ENCODE measurements at regions of chr19 and their contacts with region 1.

Region 1: DNA sequence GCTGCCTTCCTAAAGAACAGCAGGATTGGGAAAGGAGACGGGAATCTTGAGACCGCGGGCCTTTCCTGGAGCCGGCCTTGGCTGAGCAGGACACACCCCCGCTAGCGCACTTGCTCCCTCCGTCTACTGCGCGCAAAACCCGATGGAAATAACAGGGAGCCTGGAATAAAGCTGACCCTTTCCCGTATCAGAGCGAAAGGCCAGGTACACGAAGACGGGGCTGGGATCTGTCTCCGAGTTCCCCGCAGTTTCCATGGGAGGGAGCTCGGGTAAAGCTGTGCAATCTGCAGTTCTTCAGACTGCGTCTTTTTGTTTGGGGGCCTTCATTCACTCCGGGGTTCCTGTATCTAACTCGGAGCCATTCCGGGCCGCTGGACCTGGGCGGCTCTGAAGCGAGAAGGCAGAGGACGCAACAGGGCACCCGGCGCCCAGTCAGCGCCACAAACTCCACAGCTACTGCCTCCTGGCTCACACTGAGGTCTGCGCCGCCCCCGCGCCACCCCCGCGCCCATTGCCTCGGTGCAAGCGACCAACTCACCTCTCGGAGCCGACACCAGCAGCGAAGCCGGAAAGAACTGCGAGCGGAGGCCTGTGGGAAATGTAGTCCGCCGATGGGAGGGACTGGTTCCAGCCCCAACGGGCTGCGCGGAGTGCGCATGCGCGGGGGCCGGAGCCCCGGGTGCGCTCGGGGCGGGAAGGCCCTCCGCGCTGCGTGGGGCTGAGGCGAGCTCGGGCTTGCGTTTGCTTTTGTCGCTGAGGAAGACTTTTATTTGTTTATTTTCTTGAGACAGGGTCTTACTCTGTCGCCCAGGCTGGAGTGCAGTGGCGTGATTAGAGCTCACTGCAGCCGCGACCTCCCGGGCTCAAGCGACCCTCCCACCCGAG is at the start of gene ZFP14:
- DNase-seq: peak; percentile 97
- ATAC-seq: peak; percentile 99
- H3K4me3 Mint-ChIP-seq: peak within 1 kb of the TSS; percentile 93
- H3K27ac Mint-ChIP-seq: peak within 1 kb of the TSS; percentile 88
- H3K4me1 Mint-ChIP-seq: peaks cover 18% of the 10 kb centered on the region
- H3K27me3 Mint-ChIP-seq: no peaks in the 10 kb centered on the region
- total RNA-seq, gene ZFP14: 1.4 to 1.8 TPM

Region 2: DNA sequence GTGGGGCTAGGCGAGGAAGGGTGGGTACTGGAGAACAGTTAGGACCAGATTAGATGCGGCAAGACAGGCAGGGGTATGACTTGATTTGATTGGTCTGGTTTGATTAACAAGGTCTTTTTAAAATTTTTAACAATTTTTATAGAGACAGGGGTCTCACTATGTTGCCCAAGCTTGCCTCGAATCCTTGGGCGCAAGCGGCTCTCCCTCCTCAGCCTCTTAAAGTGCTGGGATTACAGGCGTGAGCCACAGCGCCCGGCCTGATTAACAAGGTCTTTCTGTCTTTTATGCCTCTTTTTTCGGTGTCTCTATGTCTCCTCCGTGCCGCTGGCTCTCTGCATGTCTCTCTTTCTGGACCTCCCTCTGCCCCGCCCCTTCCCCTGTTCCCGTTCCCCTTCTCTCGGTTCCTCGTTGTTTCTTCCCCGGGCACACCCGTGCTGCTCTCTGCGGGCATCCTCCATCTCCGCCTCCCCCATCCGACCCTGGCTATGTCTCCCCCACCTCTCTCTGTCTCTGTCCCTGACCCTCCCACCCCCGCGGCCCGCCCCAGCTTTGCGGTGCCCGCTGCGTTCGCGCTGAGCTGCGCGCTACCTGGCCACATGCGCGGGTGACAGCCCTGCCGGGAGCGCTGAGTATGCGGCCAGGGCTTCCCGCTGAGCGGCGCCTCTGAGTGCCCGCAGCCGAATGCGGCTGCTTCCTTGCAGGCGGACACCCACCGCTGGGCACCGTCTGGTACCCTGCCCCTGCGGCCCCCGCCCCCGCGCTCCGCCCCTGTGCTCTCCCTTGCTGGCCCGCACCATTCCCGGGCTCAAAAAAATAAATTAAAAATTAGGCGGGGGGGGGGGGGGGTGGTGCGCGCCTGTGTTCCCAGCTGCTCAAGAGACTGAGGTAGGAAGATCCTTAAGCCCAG is 391.9 kb before region 1 on chr19:
- CTCF ChIA-PET with region 1: no interaction called
- POLR2A ChIA-PET with region 1: no interaction called
- intact Hi-C with region 1: no loop called
- DNase-seq: peak; percentile 55
- ATAC-seq: peak; percentile 80
- H3K4me3 Mint-ChIP-seq: peak overlapping the region; percentile 62
- H3K27ac Mint-ChIP-seq: no peak overlapping the region
- H3K4me1 Mint-ChIP-seq: peaks cover 5% of the 10 kb centered on the region
- H3K27me3 Mint-ChIP-seq: peaks cover 35% of the 10 kb centered on the region

Region 3: GRCh38 chr19:36331353-36332228 is 47.3 kb before region 1 on chr19:
- CTCF ChIA-PET with region 1: no interaction called
- POLR2A ChIA-PET with region 1: no interaction called
- intact Hi-C with region 1: loop called in 1 of 2 experiments (anchors 1 kb)
- DNase-seq: peak; percentile 82
- ATAC-seq: peak; percentile 97
- H3K4me3 Mint-ChIP-seq: peak overlapping the region; percentile 67
- H3K27ac Mint-ChIP-seq: peak overlapping the region; percentile 47
- H3K4me1 Mint-ChIP-seq: peaks cover 13% of the 10 kb centered on the region
- H3K27me3 Mint-ChIP-seq: no peaks in the 10 kb centered on the region

Region 4: GRCh38 chr19:36528194-36528920 is 149.5 kb after region 1 on chr19 and contains the start of gene ZNF260:
- CTCF ChIA-PET with region 1: no interaction called
- POLR2A ChIA-PET with region 1: no interaction called
- intact Hi-C with region 1: loop called (anchors 1 to 2 kb)
- DNase-seq: peak; percentile 97
- ATAC-seq: peak; percentile 91
- H3K4me3 Mint-ChIP-seq: peak within 1 kb of the TSS; percentile 87
- H3K27ac Mint-ChIP-seq: peak within 1 kb of the TSS; percentile 96
- H3K4me1 Mint-ChIP-seq: peaks cover 14% of the 10 kb centered on the region
- H3K27me3 Mint-ChIP-seq: no peaks in the 10 kb centered on the region
- total RNA-seq, gene ZNF260: 5.7 to 8.2 TPM

Region 5: DNA sequence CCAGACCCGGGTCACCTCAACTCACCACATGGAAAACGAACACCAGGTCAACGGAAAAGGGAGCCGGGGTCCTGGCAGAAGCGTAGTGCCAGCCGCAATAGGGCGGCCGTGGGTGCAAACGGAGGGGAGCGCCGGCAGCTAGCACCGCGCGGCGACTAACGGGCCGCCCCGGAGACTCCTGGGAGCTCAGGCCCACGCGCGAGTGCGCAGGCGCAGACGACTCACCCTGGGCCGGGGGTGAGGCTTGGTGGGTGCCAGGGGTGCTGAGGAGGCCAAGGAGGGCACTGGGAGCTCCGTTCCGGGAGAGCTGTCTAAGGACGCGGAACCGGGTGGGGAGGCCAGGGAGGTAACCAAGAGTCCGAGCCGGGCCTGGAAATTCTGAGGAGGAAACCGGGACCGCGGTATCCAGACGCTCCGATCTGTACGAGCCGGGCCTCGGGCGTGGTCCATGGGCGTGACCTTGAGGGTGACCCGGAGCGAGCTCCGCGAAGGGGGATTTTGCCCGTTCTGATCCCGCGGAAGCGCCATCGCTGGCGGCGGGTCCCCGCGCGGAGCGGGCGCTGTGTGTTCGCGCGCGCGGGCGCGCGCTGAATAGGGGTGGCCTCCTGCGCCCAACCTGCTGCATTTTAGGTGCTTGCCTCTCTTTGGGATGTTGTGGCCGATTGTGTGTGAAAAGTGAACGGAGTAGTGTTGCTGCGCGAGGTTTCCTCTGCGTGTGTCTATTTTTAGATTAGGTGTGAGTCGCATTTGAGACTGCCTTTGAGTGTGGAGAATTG is 226.4 kb after region 1 on chr19 and contains the start of gene ZNF382:
- CTCF ChIA-PET with region 1: no interaction called
- POLR2A ChIA-PET with region 1: no interaction called
- intact Hi-C with region 1: loop called in 1 of 2 experiments (anchors 1 kb)
- DNase-seq: peak; percentile 94
- ATAC-seq: peak; percentile 86
- H3K4me3 Mint-ChIP-seq: peak within 1 kb of the TSS; percentile 81
- H3K27ac Mint-ChIP-seq: peak within 1 kb of the TSS; percentile 91
- H3K4me1 Mint-ChIP-seq: peaks cover 20% of the 10 kb centered on the region
- H3K27me3 Mint-ChIP-seq: no peaks in the 10 kb centered on the region
- total RNA-seq, gene ZNF382: 14.9 to 20.0 TPM

Region 6: DNA sequence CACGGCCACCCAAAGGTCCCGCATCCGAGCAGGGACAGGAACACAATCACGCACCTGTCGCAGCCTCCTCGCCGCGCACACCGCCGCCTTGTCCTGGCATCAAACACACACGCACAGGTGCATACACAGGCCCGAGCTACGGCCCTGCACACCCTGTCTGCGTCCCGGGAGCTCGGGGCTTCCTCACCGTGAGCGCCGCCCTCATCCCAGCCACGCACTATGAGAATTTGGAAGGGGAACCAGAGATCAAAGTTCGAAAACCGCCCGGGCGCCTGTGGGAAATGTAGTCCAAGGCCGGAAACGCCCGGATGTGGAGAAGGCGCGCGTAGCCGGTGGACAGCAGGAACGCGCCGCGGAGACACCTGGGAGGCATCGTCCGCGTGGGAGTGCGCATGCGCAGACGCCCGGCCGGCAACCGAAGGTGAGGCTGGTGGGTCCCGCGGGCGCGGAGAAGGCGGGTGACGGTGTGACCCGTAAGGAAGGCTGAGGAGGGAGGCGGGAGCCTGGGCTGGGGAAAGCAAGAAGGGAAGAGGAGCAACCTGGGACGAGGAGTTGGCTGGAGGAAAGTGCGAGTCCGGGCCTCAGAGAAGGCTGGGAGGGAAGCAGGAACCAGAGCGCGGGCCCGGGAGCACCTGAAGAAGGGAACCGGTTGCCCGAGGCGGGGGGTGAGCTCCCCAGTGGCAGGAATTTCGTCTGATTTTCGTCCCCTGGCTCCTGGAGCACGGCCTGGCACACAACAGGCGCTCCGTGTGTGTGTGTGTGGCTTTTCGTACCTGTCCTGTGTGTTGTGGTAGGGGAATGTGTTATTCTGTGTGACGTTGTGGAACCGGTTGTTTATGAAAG is 308.6 kb after region 1 on chr19 and contains the start of gene ZNF567:
- CTCF ChIA-PET with region 1: no interaction called
- POLR2A ChIA-PET with region 1: no interaction called
- intact Hi-C with region 1: loop called in 1 of 2 experiments (anchors 1 kb)
- DNase-seq: peak; percentile 99
- ATAC-seq: peak; percentile 93
- H3K4me3 Mint-ChIP-seq: peak within 1 kb of the TSS; percentile 99
- H3K27ac Mint-ChIP-seq: peak within 1 kb of the TSS; percentile 96
- H3K4me1 Mint-ChIP-seq: peaks cover 27% of the 10 kb centered on the region
- H3K27me3 Mint-ChIP-seq: no peaks in the 10 kb centered on the region
- total RNA-seq, gene ZNF567: 7.4 to 8.6 TPM

Region 7: DNA sequence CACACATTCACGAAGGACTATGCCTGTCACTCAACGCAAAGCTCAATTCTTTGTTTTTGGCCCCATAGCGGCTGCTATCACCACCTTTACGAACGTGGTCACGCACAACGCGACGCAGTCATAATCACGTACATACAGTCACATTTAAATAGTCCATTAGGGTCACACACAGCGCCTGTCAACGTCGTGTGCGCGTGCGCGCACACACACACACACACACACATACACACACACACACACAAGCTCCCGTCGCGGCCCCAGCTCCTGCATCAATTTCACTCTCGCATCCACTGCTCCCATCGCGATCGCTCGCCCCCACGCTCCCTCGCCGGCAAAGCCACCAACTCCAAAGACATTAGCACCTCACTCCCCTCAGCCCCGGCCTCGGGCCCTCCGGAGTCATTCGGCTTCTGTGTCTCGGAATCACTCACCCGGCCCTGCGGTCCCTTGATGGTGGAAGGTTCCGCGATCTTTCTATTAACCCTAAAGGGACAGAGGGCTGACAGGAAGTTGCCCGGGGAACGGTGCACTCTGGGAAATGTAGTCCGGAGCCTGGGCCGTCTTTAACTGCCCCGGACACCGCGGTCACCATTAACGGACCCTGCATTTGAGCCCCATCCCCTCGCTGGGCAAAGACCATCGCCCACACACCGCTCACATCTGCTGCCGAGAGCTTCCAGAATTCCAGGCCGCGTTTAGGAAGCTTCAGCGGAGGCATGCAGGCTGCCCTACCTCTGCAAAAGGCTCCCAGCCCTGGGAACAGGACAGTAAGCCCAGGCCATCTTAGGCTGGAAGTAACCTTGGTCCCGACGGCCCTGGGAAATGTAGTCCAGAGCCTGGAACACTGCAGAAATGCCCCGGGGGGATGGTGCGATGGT is 459.3 kb after region 1 on chr19 and contains the start of gene ZNF790:
- CTCF ChIA-PET with region 1: no interaction called
- POLR2A ChIA-PET with region 1: interaction called, 4 read pairs
- intact Hi-C with region 1: loop called in 1 of 2 experiments (anchors 1 kb)
- DNase-seq: peak; percentile 92
- ATAC-seq: peak; percentile 97
- H3K4me3 Mint-ChIP-seq: no peak within 1 kb of the TSS
- H3K27ac Mint-ChIP-seq: peak within 1 kb of the TSS; percentile 72
- H3K4me1 Mint-ChIP-seq: peaks cover 2% of the 10 kb centered on the region
- H3K27me3 Mint-ChIP-seq: no peaks in the 10 kb centered on the region
- total RNA-seq, gene ZNF790: 7.1 to 8.8 TPM

Region 8: GRCh38 chr19:37095859-37096258 is 717.0 kb after region 1 on chr19:
- CTCF ChIA-PET with region 1: no interaction called
- POLR2A ChIA-PET with region 1: no interaction called
- intact Hi-C with region 1: no loop called
- DNase-seq: no peak
- ATAC-seq: no peak
- H3K4me3 Mint-ChIP-seq: no peak overlapping the region
- H3K27ac Mint-ChIP-seq: no peak overlapping the region
- H3K4me1 Mint-ChIP-seq: no peaks in the 10 kb centered on the region
- H3K27me3 Mint-ChIP-seq: no peaks in the 10 kb centered on the region

Region 9: DNA sequence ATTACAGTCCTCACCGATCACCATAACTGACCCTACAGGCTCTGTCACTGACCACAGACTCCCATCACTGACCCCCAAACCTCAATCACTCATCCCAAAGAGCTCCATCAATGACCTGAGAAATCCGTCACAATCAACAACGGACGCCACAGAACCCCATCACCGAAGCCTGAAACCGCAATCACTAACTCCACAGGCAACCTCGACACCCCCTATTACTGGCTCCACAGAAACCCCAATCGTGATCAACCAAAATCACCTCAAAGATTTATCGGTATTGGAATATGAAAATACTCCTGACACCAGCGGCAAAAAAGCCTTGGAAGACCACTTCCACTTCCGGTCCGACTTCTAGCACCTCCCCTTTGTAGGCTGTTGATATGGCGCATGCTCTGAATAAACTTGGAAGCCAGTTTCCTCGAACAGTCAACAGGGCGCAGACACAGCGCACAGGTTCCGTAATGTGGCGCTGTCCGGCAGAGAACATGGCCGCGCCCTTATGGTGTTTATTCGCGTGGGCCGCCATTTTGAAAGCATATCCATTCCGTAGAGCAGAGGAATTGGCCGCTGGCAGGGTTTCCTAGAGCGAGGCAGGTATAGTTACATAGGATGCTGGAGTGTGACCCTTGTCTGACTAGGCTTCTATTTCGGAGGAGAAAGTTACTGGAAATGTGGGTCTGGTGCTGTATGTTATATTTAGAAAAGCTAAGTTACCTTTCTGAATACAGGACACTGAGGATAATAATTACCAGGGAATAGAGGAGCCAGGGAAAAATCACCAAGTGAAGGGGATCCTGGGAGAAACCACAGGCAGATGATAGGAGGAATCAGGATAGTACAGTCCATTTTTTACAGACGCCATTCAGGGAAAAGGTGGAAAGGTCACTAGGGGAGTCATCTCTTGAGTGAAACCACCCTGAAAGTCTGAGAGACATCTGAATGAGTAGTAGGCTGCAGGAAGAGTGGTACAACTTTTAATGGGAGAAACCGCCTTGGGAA is 793.8 kb after region 1 on chr19 and contains the start of gene ZNF585A:
- CTCF ChIA-PET with region 1: no interaction called
- POLR2A ChIA-PET with region 1: no interaction called
- intact Hi-C with region 1: loop called in 1 of 2 experiments (anchors 2 kb)
- DNase-seq: peak; percentile 92
- ATAC-seq: peak; percentile 100
- H3K4me3 Mint-ChIP-seq: no peak within 1 kb of the TSS
- H3K27ac Mint-ChIP-seq: no peak within 1 kb of the TSS
- H3K4me1 Mint-ChIP-seq: no peaks in the 10 kb centered on the region
- H3K27me3 Mint-ChIP-seq: no peaks in the 10 kb centered on the region
- total RNA-seq, gene ZNF585A: 8.7 to 9.8 TPM